ENCODE measurements at regions of chr22 and their contacts with region 1.

Region 1: DNA sequence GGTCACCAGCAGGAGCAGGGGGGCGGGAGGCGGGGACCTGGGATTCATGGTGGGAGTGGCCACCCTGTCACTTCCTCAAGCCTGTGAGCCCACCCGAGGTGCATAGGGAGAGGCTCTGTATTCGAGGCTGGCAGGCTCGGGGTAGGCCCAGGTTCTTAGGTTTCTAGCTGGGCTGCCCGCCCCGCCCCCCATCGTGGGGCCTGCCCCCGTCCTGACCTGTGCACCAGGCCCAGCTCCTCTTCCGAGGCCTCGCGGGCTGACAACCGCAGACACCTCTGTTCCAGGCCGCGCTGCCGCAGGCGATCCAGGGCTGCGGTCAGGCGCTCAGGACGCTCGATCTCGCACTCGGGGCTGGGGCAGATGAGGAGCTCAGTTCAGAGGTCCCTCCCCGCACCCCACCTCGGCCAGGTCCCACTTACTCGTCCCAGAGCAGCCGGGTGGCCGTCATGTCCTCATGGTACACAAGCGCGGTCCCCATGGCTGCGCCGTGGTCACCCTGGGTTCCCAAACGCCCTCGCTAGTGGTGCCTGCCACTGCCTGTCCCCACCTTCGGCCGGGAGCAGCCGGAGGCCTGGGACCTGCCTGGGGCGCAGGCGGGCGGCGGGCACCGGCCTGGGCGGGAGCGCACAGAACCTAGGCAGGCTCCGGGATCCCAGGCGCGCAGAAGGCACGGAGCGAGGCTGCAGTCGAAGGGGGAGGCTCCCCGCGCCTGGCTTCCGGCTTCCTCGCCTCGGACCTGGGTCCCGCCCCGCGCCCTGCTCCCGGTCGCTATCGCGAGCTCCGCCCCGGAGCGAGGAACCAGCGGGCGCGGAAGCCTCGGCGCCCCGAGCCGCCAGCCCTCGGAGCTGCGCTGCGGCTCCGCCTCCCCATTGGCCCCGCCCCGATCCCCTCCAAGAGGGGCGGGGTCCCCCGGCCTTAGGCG is at the start of gene HDAC10:
- DNase-seq: peak; percentile 76
- ATAC-seq: peak; percentile 82
- H3K4me3 Mint-ChIP-seq: peak within 1 kb of the TSS; percentile 84
- H3K27ac Mint-ChIP-seq: peak within 1 kb of the TSS; percentile 4
- H3K4me1 Mint-ChIP-seq: peaks cover 25% of the 10 kb centered on the region
- H3K27me3 Mint-ChIP-seq: no peaks in the 10 kb centered on the region
- CTCF ChIP-seq: no peak
- total RNA-seq, gene HDAC10: 65.0 and 68.2 TPM in 2 replicates

Region 2: DNA sequence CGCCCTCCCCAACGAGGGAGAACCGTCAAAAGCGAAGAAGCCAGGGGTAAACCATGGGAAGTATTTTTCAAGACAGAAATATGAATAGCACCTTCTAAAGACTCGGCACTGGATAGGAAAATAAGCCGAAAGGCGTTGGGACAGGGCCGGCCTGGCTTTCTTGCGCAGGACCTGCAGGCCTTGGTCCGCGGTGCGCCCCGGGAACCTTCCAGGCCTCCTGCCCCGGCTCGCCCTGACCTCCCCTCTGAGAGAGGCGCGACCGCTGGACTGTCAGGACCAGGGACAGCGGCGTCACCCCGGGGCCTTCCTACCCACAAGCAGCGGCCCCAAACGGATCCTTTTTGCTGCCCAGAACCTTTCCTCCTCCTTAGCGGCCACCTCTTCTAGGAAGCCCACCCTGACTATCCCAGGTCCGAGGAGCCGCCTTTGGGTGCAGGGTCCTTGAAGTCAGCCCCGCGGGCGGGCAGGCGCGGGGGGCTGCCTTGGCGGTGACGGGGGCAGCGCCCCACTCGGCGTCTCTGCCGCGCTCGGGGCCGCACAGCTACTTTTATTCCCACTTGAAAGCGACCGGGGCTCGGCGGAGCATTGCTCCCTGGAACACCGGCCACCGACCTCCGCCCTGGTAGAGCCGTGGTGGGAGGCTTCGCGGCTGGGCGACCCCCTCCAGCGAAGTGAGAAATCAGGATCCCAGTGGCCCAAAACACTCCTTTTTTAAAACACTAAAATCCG is 20.0 kb after region 1 on chr22:
- CTCF ChIA-PET with region 1: interaction called, 4 read pairs
- POLR2A ChIA-PET with region 1: interaction called, 6 read pairs
- intact Hi-C with region 1: loop called (anchors 1 kb)
- DNase-seq: peak; percentile 67
- ATAC-seq: peak; percentile 46
- H3K4me3 Mint-ChIP-seq: peak overlapping the region; percentile 73
- H3K27ac Mint-ChIP-seq: no peak overlapping the region
- H3K4me1 Mint-ChIP-seq: peaks cover 17% of the 10 kb centered on the region
- H3K27me3 Mint-ChIP-seq: no peaks in the 10 kb centered on the region
- CTCF ChIP-seq: no peak

Region 3: DNA sequence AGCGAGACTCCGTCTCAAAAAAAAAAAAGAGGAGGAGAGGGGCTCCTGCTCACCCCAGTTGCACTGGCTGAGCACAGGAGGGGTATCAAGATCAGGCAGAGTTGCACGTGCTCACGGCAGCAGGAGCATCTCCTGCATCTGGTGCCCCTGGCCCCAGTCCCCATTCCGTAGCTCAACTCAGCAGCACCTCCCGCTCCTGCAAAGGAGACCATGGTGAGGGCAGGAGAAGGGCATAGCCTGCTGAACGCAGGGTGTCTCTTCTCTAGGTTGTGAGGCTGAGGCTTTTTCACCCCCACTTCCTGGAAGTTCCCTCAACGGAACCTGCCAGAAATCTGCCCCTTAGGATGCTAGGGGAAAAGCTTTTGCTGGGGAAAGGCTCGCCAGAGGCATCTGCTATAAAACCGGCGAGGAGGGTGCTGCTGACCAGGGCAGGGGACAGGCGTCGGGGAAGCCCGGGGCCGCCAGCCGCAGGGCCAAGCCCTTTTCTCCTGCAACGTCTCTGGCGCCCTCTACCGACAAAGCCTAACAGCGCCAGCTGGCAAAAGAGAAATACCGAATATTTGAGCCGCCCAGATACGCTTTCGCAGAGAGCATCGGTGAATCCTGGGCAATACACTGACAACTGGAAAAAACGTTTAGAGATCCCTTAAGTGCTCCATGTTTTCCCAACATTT is 91.3 kb after region 1 on chr22:
- CTCF ChIA-PET with region 1: interaction called, 39 read pairs
- POLR2A ChIA-PET with region 1: interaction called, 8 read pairs
- intact Hi-C with region 1: loop called (anchors 1 kb)
- DNase-seq: peak; percentile 80
- ATAC-seq: peak; percentile 61
- H3K4me3 Mint-ChIP-seq: peak overlapping the region; percentile 83
- H3K27ac Mint-ChIP-seq: peak overlapping the region; percentile 89
- H3K4me1 Mint-ChIP-seq: peaks cover 12% of the 10 kb centered on the region
- H3K27me3 Mint-ChIP-seq: no peaks in the 10 kb centered on the region
- CTCF ChIP-seq: peak; percentile 91

Region 4: DNA sequence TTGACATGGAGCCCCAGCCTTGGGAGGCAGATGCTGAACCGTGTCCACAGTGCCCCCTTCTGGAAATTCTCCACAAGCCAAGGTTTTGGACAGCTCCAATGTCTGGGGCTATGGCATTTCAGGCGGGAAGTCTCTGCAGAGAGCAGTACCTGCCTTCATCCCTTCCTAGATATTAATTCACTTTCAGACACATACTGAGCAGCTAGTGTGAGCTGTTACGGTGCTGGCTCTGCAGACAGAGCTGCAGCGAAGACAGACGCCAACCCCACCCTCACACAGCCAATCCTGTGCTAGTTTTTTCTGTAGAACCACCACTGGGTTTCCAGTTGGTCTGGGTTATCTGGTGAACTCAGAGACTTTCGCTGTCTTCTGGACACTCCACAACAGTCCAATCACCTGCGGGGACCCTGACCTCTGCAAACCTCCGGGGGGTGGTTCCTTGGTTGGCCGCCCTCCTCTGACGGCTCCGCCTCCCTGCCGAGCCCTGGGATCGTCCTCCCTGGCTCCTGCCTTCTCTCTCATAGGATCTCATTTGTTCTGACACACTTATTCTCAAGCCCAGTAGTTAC is 247.6 kb after region 1 on chr22:
- CTCF ChIA-PET with region 1: interaction called, 13 read pairs
- POLR2A ChIA-PET with region 1: no interaction called
- intact Hi-C with region 1: loop called (anchors 1 kb)
- DNase-seq: peak; percentile 38
- ATAC-seq: peak; percentile 95
- H3K4me3 Mint-ChIP-seq: no peak overlapping the region
- H3K27ac Mint-ChIP-seq: no peak overlapping the region
- H3K4me1 Mint-ChIP-seq: peaks cover 3% of the 10 kb centered on the region
- H3K27me3 Mint-ChIP-seq: no peaks in the 10 kb centered on the region
- CTCF ChIP-seq: no peak

Region 5: DNA sequence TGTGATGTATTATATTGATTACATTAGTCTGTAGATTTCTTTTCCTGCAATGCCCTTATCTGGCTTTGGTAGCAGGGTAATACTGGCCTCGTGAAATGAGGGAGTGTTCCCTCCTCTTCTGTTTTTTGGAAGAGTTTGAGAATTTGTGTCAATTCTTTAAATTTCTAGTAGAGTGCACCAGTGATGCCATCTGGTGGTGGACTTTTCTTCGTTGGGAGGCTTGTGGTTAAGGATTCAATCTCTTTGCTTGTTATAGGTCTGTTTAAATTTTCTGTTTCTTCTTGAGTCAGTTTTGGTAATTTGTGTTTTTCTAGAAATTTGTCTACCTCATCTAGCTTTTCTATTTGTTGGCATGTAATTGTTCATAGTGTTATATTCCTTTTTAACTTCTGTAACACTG is 440.7 kb after region 1 on chr22:
- CTCF ChIA-PET with region 1: no interaction called
- POLR2A ChIA-PET with region 1: no interaction called
- intact Hi-C with region 1: loop called (anchors 1 kb)
- DNase-seq: no peak
- ATAC-seq: no peak
- H3K4me3 Mint-ChIP-seq: no peak overlapping the region
- H3K27ac Mint-ChIP-seq: no peak overlapping the region
- H3K4me1 Mint-ChIP-seq: peaks cover 4% of the 10 kb centered on the region
- H3K27me3 Mint-ChIP-seq: peaks cover 5% of the 10 kb centered on the region
- CTCF ChIP-seq: no peak

Measured in activated B cell treated with CpG ODN at 0.5 μM for 24 hours (primary cell).